ENCODE measurements at regions of chr12 and their contacts with region 1.

Region 1: GRCh38 chr12:70645494-70646317 is 8.5 kb upstream of the PTPRB start:
- DNase-seq: peak; percentile 62
- ATAC-seq: peak; percentile 72

Region 2: GRCh38 chr12:70609711-70610491 is 35.8 kb before region 1 on chr12:
- intact Hi-C with region 1: loop called (anchors 5 kb)
- DNase-seq: peak; percentile 71
- ATAC-seq: peak; percentile 72

Measured in Right ventricle myocardium inferior (tissue), 1 donor.